ENCODE measurements at regions of chr13 and their contacts with region 1.

Region 1: GRCh38 chr13:102870677-102871415 is 25.0 kb downstream of the ERCC5 start:
- DNase-seq: no peak
- H3K4me3 ChIP-seq: no peak overlapping the region
- H3K27ac ChIP-seq: no peak overlapping the region
- H3K27me3 ChIP-seq: no peaks in the 10 kb centered on the region
- CTCF ChIP-seq: peak; percentile 85

Region 2: GRCh38 chr13:102091231-102091630 is 779.6 kb before region 1 on chr13:
- CTCF ChIA-PET with region 1: no interaction called
- POLR2A ChIA-PET with region 1: no interaction called
- DNase-seq: no peak
- H3K4me3 ChIP-seq: no peak overlapping the region
- H3K27ac ChIP-seq: no peak overlapping the region
- H3K27me3 ChIP-seq: no peaks in the 10 kb centered on the region
- CTCF ChIP-seq: no peak

Region 3: DNA sequence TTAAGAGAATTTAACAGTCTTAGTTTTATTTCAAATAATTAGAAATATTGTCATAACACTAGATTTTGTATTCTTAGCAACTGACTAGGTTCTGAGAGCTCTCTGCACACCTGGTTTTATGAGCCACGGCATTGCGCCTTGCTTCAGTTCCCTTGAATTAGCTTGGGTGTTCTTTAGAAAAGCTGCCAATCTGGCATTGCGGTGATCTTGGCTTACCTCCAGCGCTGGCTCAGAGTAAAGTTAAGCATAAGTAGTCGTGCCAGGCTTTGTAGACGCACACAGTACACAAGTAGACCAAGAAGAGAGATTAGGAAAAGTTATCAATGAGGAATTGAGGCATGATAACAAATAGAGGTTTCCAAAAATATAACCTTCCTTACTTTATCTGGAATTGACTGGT is 228.4 kb before region 1 on chr13:
- CTCF ChIA-PET with region 1: interaction called, 10 read pairs
- POLR2A ChIA-PET with region 1: no interaction called
- DNase-seq: no peak
- H3K4me3 ChIP-seq: no peak overlapping the region
- H3K27ac ChIP-seq: no peak overlapping the region
- H3K27me3 ChIP-seq: no peaks in the 10 kb centered on the region
- CTCF ChIP-seq: no peak

Region 4: GRCh38 chr13:102845630-102846260 is 25.1 kb before region 1 on chr13 and contains the start of gene ERCC5:
- CTCF ChIA-PET with region 1: interaction called, 20 read pairs
- POLR2A ChIA-PET with region 1: no interaction called
- DNase-seq: peak; percentile 79
- H3K4me3 ChIP-seq: peak within 1 kb of the TSS; percentile 95
- H3K27ac ChIP-seq: peak within 1 kb of the TSS; percentile 92
- H3K27me3 ChIP-seq: no peaks in the 10 kb centered on the region
- CTCF ChIP-seq: no peak
- polyA plus RNA-seq, gene ERCC5: 39.2 and 47.6 TPM in 2 replicates

Region 5: GRCh38 chr13:102856557-102856956 is 14.3 kb before region 1 on chr13:
- CTCF ChIA-PET with region 1: interaction called, 22 read pairs
- POLR2A ChIA-PET with region 1: no interaction called
- DNase-seq: no peak
- H3K4me3 ChIP-seq: no peak overlapping the region
- H3K27ac ChIP-seq: no peak overlapping the region
- H3K27me3 ChIP-seq: no peaks in the 10 kb centered on the region
- CTCF ChIP-seq: no peak

Region 6: DNA sequence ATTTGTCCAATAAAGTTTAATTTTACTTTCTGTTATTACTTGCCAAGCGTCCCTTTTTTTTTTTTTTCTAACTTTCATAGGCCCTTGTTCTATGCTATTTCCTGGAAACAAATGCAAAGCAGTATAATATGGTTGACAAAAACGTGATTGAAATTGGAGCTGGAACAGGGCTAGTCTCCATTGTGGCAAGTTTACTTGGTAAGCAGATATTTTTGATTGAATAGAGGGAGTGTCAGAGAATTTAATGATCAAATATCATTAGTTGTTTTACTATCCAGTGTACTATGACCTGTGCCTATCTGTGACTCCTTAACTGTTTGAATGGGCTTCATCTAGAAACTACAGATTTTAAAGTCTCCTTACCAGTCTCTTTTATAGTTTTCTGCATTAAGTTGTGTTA is 21.7 kb after region 1 on chr13:
- CTCF ChIA-PET with region 1: interaction called, 10 read pairs
- POLR2A ChIA-PET with region 1: no interaction called
- DNase-seq: no peak
- H3K4me3 ChIP-seq: no peak overlapping the region
- H3K27ac ChIP-seq: no peak overlapping the region
- H3K27me3 ChIP-seq: no peaks in the 10 kb centered on the region
- CTCF ChIP-seq: no peak